ENCODE measurements at regions of chr6 and their contacts with region 1.

Region 1: GRCh38 chr6:52399511-52400312 is 20.4 kb upstream of the EFHC1 start:
- DNase-seq: peak; percentile 70

Region 2: DNA sequence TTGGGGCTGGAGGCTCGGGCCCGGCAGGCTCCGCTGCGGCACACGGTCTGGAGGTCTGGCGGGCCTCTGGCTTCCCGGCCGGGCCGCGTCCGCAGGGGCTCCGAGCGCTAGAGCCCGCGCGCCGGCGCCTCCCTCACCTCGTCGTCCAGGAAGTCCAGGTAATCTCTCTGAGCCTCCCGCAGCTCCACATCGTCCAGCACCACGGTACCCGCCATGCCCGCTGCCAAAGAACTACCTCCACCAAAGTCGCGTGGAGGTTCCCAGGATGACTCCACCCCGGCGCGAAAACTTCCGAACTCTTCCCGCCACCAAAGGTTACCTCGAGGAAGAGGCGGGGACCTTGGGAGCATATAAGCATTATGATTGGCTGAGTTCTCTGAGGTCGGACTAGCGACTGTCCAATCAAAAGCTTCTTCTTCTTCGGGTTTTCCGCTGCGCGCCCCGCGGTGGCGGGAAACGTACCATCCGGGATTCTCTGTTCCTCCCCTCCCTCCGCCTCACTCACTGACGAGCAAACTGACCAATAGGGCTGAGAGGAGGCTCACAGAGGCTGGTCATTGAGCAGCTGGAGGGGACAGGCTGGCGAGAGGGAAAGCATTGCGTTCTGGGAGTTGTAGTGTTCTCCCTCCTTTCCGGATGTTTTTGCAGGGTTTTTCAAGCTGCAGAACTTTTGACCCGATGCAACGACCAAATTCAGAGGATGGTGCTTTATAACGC is 115.1 kb before region 1 on chr6 and contains the start of gene MCM3:
- in situ Hi-C with region 1: loop called (anchors 10 kb)
- DNase-seq: peak; percentile 100
- total RNA-seq, gene MCM3: 326 and 392 TPM in 2 replicates

Region 3: DNA sequence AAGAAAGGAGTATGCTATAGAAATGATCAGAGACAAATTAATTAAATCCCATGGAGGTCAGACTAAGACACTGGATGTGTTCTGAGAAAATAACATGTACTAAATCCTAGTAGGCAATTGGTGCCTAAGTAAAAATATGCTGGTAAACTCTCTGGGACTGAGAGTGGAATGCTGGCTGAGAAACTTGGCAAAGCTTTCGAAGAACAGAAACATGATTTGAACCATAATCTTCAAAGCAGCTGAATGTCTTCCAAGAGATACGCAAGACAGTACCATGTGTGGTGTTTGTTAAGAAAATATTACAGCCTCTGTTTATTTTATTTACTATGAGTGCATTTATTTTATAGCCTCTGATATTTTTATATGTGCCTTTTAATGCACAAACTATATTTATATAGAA is 75.6 kb after region 1 on chr6:
- in situ Hi-C with region 1: no loop called
- DNase-seq: no peak

Measured in G401 (cell line).